ENCODE measurements at regions of chr6 and their contacts with region 1.

Region 1: GRCh38 chr6:33585403-33586107 is 5.5 kb upstream of the BAK1 start:
- DNase-seq: peak; percentile 50 to 92
- H3K4me3 ChIP-seq: no peak overlapping the region
- H3K27ac ChIP-seq: no peak overlapping the region
- H3K4me1 ChIP-seq: peaks cover under 1 to 5% of the 10 kb centered on the region in 2 donors
- H3K27me3 ChIP-seq: no peaks in the 10 kb centered on the region
- CTCF ChIP-seq: peak; percentile 91 to 99 (median 96)

Region 2: GRCh38 chr6:33391922-33392594 is 193.5 kb before region 1 on chr6:
- intact Hi-C with region 1: no loop called
- DNase-seq: no peak
- H3K4me3 ChIP-seq: peak overlapping the region; percentile 65 to 77
- H3K27ac ChIP-seq: peak overlapping the region; percentile 69 to 91
- H3K4me1 ChIP-seq: peaks cover 3 to 6% of the 10 kb centered on the region in 2 donors
- H3K27me3 ChIP-seq: no peaks in the 10 kb centered on the region
- CTCF ChIP-seq: no peak

Region 3: DNA sequence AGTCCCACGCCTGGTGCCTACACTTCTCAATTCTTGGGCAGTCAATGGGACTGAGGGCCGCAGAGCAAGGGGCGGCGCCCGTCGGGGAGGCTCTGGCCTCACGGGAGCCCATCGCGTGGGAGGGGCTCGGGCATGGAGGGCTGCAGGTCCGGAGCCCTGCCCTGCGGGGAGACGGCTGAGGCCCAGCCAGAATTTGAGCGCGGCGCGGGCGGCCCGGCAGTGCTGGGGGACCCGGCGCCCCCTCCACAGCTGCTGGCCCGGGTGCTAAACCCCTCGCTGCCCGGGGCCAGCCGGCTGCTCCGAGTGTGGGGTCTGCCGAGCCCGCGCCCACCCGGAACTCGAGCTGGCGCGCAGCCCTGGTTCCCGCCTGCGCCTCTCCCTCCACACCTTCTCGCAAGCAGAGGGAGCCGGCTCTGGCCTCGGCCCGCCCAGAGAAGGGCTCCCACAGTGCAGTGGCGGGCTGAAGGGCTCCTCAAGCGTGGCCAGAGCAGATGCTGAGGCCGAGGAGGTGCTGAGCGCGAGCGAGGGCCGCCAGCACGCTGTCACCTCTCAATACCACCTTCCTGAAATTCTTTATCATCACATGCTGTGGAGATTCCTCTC is 64.0 kb before region 1 on chr6:
- intact Hi-C with region 1: no loop called
- DNase-seq: no peak
- H3K4me3 ChIP-seq: no peak overlapping the region
- H3K27ac ChIP-seq: no peak overlapping the region
- H3K4me1 ChIP-seq: no peaks in the 10 kb centered on the region
- H3K27me3 ChIP-seq: no peaks in the 10 kb centered on the region
- CTCF ChIP-seq: no peak

Region 4: GRCh38 chr6:33633462-33634158 is 48.1 kb after region 1 on chr6:
- intact Hi-C with region 1: loop called (anchors 2 kb)
- DNase-seq: peak in 1 of 2 donors; percentile 71
- H3K4me3 ChIP-seq: peak overlapping the region; percentile 49 to 72
- H3K27ac ChIP-seq: peak overlapping the region in 1 of 2 donors; percentile 27
- H3K4me1 ChIP-seq: peaks cover 5 to 13% of the 10 kb centered on the region in 2 donors
- H3K27me3 ChIP-seq: no peaks in the 10 kb centered on the region
- CTCF ChIP-seq: no peak

Region 5: GRCh38 chr6:33700391-33701050 is 115.0 kb after region 1 on chr6:
- intact Hi-C with region 1: loop called (anchors 2 kb)
- DNase-seq: peak in 1 of 2 donors; percentile 74
- H3K4me3 ChIP-seq: no peak overlapping the region
- H3K27ac ChIP-seq: no peak overlapping the region
- H3K4me1 ChIP-seq: no peaks in the 10 kb centered on the region
- H3K27me3 ChIP-seq: no peaks in the 10 kb centered on the region
- CTCF ChIP-seq: peak; percentile 15 to 40 (median 26)

Region 6: GRCh38 chr6:33771146-33772081 is 185.9 kb after region 1 on chr6:
- intact Hi-C with region 1: loop called (anchors 5 kb)
- DNase-seq: peak in 1 of 2 donors; percentile 87
- H3K4me3 ChIP-seq: peak overlapping the region; percentile 18 to 42
- H3K27ac ChIP-seq: peak overlapping the region; percentile 80 to 92
- H3K4me1 ChIP-seq: peaks cover 12 to 44% of the 10 kb centered on the region in 2 donors
- H3K27me3 ChIP-seq: no peaks in the 10 kb centered on the region
- CTCF ChIP-seq: peak; percentile 92 to 97 (median 94)

Region 7: GRCh38 chr6:33788694-33789549 is 203.4 kb after region 1 on chr6 and contains the start of gene LEMD2:
- intact Hi-C with region 1: loop called (anchors 2 kb)
- DNase-seq: peak; percentile 73 to 96
- H3K4me3 ChIP-seq: peak within 1 kb of the TSS; percentile 95
- H3K27ac ChIP-seq: peak within 1 kb of the TSS; percentile 97 to 98
- H3K4me1 ChIP-seq: peaks cover 13 to 29% of the 10 kb centered on the region in 2 donors
- H3K27me3 ChIP-seq: no peaks in the 10 kb centered on the region
- CTCF ChIP-seq: no peak
- total RNA-seq, gene LEMD2: 104 TPM

Region 8: DNA sequence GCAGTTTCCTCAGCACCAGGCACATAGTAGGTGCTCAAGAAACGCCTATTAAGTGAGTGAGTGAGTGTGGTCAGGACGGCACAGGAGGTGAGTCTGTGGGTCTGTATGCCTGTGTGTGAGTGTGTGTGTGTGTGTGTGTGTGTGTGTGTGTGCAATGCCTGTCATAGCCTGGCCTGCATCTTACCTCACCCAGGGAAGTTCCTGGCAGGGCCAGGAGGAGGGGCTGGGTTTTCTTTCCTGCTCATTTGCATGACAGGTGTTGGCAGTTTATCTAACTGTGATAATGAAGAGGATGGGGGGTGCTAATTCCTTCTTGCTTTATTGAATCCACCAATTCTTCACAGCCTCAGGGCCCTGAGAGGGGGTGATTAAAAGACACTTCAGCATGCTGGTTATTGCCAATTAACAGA is 364.9 kb after region 1 on chr6:
- intact Hi-C with region 1: no loop called
- DNase-seq: no peak
- H3K4me3 ChIP-seq: no peak overlapping the region
- H3K27ac ChIP-seq: no peak overlapping the region
- H3K4me1 ChIP-seq: no peaks in the 10 kb centered on the region
- H3K27me3 ChIP-seq: no peaks in the 10 kb centered on the region
- CTCF ChIP-seq: no peak

Region 9: DNA sequence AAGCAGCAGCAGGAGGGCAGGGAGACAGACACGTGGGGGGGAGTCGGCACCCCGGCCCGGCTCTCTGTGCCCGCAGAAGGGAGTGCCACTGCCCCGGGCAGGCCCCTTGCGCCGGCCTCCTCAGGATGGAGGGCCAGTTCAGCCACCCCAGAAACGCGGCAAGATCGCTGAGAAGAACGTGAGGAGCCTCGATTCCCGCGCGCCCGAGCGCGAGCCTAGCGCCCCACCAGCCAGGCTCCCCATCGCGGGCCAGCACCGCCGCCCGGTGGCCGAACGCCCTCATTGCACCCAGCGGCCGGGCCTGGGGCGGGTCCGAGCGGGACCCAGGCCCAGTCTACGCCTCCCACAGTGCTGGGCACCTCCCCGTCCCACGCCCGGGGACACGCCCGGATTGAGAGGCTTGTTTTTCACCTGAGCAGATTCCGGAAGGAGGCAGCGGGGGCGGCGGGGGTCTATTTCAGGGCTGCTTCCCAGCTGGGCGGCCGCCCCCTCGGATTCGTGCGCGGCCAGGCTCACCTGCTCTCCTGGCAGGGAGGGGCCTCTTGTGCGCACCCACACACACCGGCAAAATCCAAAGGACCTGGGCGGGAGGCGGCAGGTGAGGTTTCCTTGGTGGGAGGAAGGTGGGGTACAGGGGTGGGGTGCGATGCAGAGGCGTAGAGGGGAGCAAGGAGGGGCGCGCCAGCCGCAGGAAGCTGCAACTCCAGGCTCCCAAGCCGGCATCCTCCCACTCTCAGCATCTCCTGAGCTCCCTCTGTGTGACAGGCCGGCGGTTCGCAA is 569.3 kb after region 1 on chr6:
- intact Hi-C with region 1: loop called (anchors 1 kb)
- DNase-seq: peak in 1 of 2 donors; percentile 65
- H3K4me3 ChIP-seq: peak overlapping the region in 1 of 2 donors; percentile 24
- H3K27ac ChIP-seq: no peak overlapping the region
- H3K4me1 ChIP-seq: peaks cover 0 to 2% of the 10 kb centered on the region in 2 donors
- H3K27me3 ChIP-seq: peaks cover 14% of the 10 kb centered on the region
- CTCF ChIP-seq: peak; percentile 88 to 99 (median 93)

Measured in ascending aorta (tissue), 2 donors.